Activated CD4-positive, alpha-beta memory T cell treated with anti-CD3 and anti-CD28 coated beads, Interleukin-2, amount 10 ng/mL, durations not matched to agents 7 days and 5 days (primary cell): ENCODE measurements at regions of chr7 and their contacts with region 1.

Region 1: GRCh38 chr7:1940402-1940786 is 270.3 kb downstream of the ELFN1 start:
- DNase-seq: peak; percentile 96
- H3K4me3 Mint-ChIP-seq: peak overlapping the region; percentile 94
- H3K27ac Mint-ChIP-seq: peak overlapping the region; percentile 100
- H3K4me1 Mint-ChIP-seq: peaks cover 63% of the 10 kb centered on the region
- H3K27me3 Mint-ChIP-seq: no peaks in the 10 kb centered on the region

Region 2: DNA sequence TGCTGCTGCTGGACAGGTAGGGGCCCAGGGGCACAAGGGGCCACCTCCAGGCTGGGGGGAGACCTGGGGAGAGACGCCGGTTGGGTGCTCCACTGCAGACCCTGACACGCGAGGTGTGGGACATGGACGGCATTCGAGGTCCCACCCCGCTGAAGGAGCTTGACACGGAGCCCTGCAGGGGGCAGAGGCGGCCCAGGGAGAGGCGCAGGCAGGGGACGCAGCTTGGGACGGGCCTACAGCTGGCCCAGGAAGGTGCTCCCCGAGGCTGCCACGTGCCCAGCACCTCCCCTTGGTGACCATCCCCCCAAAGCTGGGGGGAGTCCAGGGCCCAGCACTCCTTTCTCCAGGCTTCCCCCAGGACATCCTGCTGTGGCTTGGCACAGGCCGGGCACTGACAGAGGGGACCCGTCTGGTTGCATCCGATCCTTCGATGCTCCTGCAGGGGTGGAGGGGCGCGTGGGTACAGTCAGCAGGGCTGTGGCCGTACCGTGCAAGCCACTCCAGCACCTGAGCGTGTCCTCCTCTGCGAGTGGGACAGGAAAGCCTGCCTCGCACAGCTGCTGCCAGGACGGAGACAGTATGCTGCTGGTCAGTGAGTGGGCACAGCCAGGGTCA is 96.0 kb before region 1 on chr7:
- CTCF ChIA-PET with region 1: no interaction called
- POLR2A ChIA-PET with region 1: no interaction called
- DNase-seq: no peak
- H3K4me3 Mint-ChIP-seq: no peak overlapping the region
- H3K27ac Mint-ChIP-seq: no peak overlapping the region
- H3K4me1 Mint-ChIP-seq: no peaks in the 10 kb centered on the region
- H3K27me3 Mint-ChIP-seq: no peaks in the 10 kb centered on the region

Region 3: DNA sequence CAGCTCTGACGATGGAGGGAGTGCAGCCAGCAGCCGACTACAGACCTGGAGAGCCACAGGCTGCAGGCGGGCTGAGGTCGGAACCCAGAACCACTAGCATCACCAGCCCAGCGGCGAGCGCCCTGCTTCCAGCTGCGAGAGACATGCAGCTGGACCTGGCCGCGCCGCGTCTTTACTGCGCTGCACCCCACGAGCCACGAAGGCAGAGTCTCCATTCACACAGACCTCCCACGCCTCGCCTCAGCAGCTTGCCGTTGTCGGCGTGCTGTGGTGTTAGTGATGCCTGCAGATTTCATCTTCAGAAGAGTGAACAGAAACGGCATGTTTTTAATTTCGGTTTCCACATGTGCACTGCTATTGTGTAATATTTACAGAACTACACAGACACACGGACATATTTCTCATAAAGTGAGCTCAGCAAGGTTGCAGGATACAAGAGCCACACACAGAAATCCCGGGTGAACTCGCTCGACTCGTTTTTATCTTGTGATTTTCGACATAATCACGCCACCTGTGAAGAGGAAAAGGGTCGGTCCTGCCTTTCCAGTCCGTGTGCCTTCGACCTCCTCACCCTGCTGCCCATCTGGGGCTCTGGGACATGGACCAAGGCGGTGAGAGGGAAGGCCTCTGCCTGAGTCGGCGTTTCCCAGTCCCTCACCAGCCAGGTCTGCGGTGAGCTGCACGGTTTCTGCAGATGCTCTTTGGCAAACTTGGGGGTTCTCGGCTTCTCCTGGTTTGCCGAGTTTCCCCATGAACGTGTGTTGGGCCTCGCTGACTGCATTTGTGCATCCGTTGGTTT is 18.1 kb before region 1 on chr7:
- CTCF ChIA-PET with region 1: interaction called, 4 read pairs
- POLR2A ChIA-PET with region 1: interaction called, 13 read pairs
- DNase-seq: peak; percentile 38
- H3K4me3 Mint-ChIP-seq: peak overlapping the region; percentile 40
- H3K27ac Mint-ChIP-seq: no peak overlapping the region
- H3K4me1 Mint-ChIP-seq: peaks cover 75% of the 10 kb centered on the region
- H3K27me3 Mint-ChIP-seq: peaks cover 13% of the 10 kb centered on the region

Region 4: GRCh38 chr7:1951159-1951536 is 10.8 kb after region 1 on chr7:
- CTCF ChIA-PET with region 1: no interaction called
- POLR2A ChIA-PET with region 1: interaction called, 19 read pairs
- DNase-seq: peak; percentile 66
- H3K4me3 Mint-ChIP-seq: no peak overlapping the region
- H3K27ac Mint-ChIP-seq: peak overlapping the region; percentile 58
- H3K4me1 Mint-ChIP-seq: peaks cover 17% of the 10 kb centered on the region
- H3K27me3 Mint-ChIP-seq: no peaks in the 10 kb centered on the region

Region 5: DNA sequence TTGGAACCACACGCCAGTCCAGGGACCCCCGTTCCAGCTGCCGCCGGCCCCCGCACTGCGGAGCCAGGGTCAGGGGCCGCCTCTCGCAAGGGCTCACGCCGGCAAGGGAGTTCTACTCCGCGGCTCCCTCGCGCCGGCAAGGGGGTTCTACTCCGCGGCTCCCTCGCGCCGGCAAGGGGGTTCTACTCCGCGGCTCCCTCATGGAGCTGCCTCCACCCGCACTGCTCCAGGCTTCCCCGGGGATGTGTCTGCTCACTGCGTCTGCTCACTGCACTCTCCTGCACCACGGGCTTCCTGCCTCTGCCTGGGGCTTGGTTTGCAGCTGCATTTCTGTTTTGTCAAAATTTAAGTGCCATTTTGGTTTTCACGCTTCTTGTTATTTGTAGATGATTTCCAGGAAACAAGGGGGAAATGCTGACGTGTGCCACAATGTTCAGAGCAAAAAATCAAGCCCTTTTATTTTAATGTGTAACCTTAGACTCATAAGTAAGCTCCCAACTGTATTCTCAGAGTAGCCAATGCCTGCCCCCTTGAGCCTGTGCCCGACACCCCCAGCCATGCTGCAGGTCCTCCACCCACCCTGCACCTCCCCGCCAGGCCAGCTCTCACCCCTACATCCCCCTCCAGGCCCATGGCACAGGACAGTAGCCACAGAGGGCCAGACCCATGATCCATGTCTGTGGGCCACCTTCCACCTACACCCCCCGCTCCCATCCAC is 46.1 kb after region 1 on chr7:
- CTCF ChIA-PET with region 1: interaction called, 9 read pairs
- POLR2A ChIA-PET with region 1: interaction called, 42 read pairs
- DNase-seq: peak; percentile 66
- H3K4me3 Mint-ChIP-seq: peak overlapping the region; percentile 32
- H3K27ac Mint-ChIP-seq: peak overlapping the region; percentile 93
- H3K4me1 Mint-ChIP-seq: peaks cover 28% of the 10 kb centered on the region
- H3K27me3 Mint-ChIP-seq: no peaks in the 10 kb centered on the region